AG04450 (cell line): ENCODE measurements at regions of chr5 and their contacts with region 1.

Region 1: GRCh38 chr5:64147849-64148441 is 17.7 kb upstream of the RNF180 start:
- DNase-seq: no peak
- H3K4me3 ChIP-seq: no peak overlapping the region
- H3K27ac ChIP-seq: no peak overlapping the region
- H3K27me3 ChIP-seq: no peaks in the 10 kb centered on the region
- CTCF ChIP-seq: peak; percentile 74

Region 2: DNA sequence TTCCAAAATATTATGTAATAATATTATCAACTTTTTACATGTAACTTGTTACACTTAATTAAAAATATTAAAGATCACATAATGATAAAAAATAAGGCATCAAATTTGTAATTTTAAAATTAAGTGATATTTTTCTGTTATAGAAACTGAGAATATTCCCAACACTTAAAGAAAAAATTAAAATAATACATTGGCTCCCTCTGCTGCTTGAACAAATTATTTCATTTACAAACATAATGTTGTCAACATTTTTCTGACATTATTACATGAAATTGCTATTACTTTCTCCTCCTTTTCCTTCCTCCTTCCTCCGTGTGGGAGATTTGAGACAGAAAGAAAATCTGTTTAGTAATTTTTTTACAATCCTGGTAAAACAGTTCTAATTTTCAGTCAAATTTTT is 60.0 kb after region 1 on chr5:
- CTCF ChIA-PET with region 1: interaction called, 20 read pairs
- POLR2A ChIA-PET with region 1: no interaction called
- DNase-seq: no peak
- H3K4me3 ChIP-seq: no peak overlapping the region
- H3K27ac ChIP-seq: no peak overlapping the region
- H3K27me3 ChIP-seq: no peaks in the 10 kb centered on the region
- CTCF ChIP-seq: peak; percentile 23; the same call in 1 of the 2 replicates